ENCODE measurements at regions of chr3 and their contacts with region 1.

Region 1: GRCh38 chr3:10772271-10773161 is 43.5 kb upstream of the SLC6A11 start:
- DNase-seq: peak; percentile 52
- ATAC-seq: peak; percentile 93
- H3K4me3 ChIP-seq: peak overlapping the region in 1 of 3 experiments; percentile 29; a peak in 1 of 6 replicates
- H3K27ac ChIP-seq: no peak overlapping the region
- H3K4me1 ChIP-seq: 0 out of 2 replicates have a peak, but pooled peaks cover 6% of the 10 kb centered on the region
- H3K27me3 ChIP-seq: peaks cover 0 to 10% of the 10 kb centered on the region in 2 experiments; a peak in 4 of 5 replicates
- CTCF ChIP-seq: peak; percentile 88
- EP300 ChIP-seq: no peak
- POLR2A ChIP-seq: no peak
- RAD21 ChIP-seq: peak; percentile 87

Region 2: GRCh38 chr3:10883478-10884234 is 111.1 kb after region 1 on chr3:
- CTCF ChIA-PET with region 1: interaction called, 52 read pairs
- POLR2A ChIA-PET with region 1: no interaction called
- in situ Hi-C with region 1: no loop called
- intact Hi-C with region 1: loop called (anchors 1 kb)
- DNase-seq: peak; percentile 33
- ATAC-seq: peak; percentile 61; the same call in 2 of the 3 replicates
- H3K4me3 ChIP-seq: no peak overlapping the region
- H3K27ac ChIP-seq: no peak overlapping the region
- H3K4me1 ChIP-seq: no peaks in the 10 kb centered on the region
- H3K27me3 ChIP-seq: no peaks in the 10 kb centered on the region; a peak in 1 of 5 replicates
- CTCF ChIP-seq: peak; percentile 85
- EP300 ChIP-seq: no peak
- POLR2A ChIP-seq: no peak
- RAD21 ChIP-seq: peak; percentile 65